ENCODE measurements at regions of chr4 and their contacts with region 1.

Region 1: DNA sequence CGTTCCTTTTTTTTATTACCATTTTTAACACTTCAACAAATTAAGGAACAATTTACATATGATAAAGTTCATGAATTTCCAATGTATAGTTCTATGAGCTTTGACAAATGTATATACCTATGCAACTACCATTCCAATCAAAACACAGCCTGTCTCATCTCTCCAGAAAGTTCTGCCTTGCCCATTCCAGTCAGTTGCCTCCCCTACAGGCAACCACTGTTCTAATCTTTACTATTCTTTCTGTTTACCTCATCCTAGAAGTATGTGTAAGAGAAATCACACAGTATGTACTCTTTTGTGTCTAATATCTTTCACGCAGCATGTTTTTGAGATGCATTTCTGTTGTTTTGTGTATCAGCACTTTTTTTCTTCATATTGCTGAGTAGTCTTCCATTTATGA is 224.9 kb downstream of the KIT start:
- DNase-seq: no peak

Region 2: GRCh38 chr4:54924639-54925284 is 42.1 kb after region 1 on chr4:
- intact Hi-C with region 1: loop called in 1 of 2 experiments (anchors 1 kb)
- DNase-seq: no peak